Astrocyte of the spinal cord (primary cell): ENCODE measurements at regions of chr6 and their contacts with region 1.

Region 1: DNA sequence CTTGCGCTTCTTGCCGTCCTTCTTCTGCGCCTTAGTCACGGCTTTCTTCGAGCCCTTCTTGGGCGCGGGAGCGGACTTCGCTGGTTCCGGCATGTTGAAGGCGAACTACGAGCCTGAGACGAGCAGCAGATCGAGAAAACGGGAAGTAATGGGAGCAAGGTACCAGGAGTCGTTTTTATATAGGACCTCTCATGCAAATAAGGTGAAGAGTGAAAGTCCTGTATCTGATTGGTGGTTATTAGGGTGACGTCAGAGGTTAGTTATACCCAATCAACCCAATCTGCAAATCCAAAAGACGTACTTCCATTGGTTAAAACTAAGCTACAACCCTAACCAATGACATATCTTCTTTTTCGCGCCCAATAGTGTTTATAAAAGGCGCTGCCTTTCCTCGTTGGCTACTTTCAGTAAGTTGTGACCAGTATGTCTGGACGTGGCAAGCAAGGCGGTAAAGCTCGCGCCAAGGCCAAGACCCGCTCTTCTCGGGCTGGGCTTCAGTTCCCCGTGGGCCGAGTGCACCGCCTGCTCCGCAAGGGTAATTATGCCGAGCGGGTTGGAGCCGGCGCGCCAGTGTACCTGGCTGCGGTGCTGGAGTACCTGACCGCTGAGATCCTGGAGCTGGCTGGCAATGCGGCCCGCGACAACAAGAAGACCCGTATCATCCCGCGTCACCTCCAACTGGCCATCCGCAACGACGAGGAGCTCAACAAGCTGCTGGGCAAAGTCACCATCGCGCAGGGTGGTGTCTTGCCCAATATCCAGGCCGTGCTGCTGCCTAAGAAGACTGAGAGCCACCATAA is 100.6 kb upstream of the PRSS16 start:
- DNase-seq: peak; percentile 100
- H3K4me3 ChIP-seq: peak overlapping the region; percentile 63
- CTCF ChIP-seq: no peak

Region 2: DNA sequence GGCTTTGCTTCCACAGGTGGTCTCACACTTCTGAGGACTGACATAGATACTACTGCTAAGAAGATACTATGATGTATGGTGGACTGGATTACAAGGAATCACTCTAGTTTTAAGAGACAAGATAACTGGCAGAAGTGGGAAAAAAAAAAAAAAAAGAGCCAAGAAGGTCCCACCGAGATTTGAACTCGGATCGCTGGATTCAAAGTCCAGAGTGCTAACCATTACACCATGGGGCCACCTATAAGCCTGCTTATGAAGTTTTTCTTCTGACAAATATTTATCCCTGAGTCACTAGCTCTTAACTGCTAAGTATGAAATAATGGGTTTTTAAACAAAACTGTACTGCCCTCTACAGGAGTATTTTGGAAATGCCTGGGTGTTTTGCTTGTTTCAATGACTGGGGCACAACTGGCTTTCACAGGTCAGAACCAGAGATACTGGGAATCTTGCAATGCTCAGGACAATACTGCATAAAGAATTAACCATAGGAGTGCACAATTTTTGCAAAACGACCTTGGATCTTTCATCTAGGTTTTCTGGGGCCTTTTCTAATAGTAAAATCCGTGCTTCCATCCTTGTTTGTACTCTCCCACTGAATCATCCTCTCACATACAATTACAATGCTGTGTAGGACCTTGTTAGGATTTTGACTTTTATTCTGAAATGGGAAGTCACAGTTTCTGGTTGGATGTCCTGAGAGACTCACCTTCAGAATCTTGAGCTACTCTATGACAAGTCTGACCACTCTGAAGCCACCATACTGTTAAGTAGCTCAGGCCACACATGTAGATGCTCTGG is 649.0 kb after region 1 on chr6:
- in situ Hi-C with region 1: no loop called
- DNase-seq: peak; percentile 95
- H3K4me3 ChIP-seq: no peak overlapping the region
- CTCF ChIP-seq: peak; percentile 64

Region 3: GRCh38 chr6:27893059-27893835 is 746.3 kb after region 1 on chr6:
- in situ Hi-C with region 1: loop called (anchors 10 kb)
- DNase-seq: peak; percentile 99
- H3K4me3 ChIP-seq: peak overlapping the region; percentile 71
- CTCF ChIP-seq: no peak